ENCODE measurements at regions of chr10 and their contacts with region 1.

Region 1: GRCh38 chr10:27223964-27224363 is 16.6 kb downstream of the ACBD5 start:
- DNase-seq: no peak
- H3K4me3 ChIP-seq: no peak overlapping the region
- H3K27ac ChIP-seq: no peak overlapping the region
- H3K4me1 ChIP-seq: no peaks in the 10 kb centered on the region
- H3K27me3 ChIP-seq: no peaks in the 10 kb centered on the region
- CTCF ChIP-seq: peak in 3 of 4 experiments; percentile 35 to 52 (median 48)
- POLR2A ChIP-seq: no peak

Region 2: DNA sequence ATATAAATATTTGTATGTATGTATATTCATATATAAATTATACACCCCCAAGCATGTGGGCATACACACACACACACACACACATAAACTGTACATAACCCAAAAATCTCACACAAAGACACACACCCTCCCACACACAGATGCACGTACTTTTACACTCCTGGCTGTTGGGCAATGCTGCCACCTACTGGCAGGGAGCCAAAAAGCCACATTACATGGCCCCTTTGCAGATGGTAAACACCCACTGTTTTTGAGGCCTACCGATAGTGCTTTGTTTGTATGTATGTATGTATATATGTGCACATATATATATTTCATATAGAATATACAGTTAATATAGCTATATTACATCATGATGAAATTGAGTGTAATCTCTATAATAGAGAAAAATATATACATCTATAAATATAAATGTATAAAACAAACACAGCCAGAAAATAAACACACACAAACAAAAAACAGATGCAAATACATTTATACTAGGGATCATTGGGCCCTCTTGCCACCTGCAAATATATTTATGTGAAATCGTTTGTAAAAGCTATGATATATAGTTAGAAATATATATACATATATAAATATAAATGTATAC is 136.7 kb after region 1 on chr10:
- intact Hi-C with region 1: loop called (anchors 5 kb)
- DNase-seq: peak; percentile 69
- H3K4me3 ChIP-seq: no peak overlapping the region
- H3K27ac ChIP-seq: no peak overlapping the region
- H3K4me1 ChIP-seq: no peaks in the 10 kb centered on the region
- H3K27me3 ChIP-seq: no peaks in the 10 kb centered on the region
- CTCF ChIP-seq: peak; percentile 20 to 67 (median 62)
- POLR2A ChIP-seq: no peak